ENCODE measurements at regions of chr6 and their contacts with region 1.

Region 1: GRCh38 chr6:18264219-18264922 is at the start of gene DEK:
- DNase-seq: peak; percentile 93
- ATAC-seq: peak; percentile 88
- total RNA-seq, gene DEK: 68.6 TPM

Region 2: DNA sequence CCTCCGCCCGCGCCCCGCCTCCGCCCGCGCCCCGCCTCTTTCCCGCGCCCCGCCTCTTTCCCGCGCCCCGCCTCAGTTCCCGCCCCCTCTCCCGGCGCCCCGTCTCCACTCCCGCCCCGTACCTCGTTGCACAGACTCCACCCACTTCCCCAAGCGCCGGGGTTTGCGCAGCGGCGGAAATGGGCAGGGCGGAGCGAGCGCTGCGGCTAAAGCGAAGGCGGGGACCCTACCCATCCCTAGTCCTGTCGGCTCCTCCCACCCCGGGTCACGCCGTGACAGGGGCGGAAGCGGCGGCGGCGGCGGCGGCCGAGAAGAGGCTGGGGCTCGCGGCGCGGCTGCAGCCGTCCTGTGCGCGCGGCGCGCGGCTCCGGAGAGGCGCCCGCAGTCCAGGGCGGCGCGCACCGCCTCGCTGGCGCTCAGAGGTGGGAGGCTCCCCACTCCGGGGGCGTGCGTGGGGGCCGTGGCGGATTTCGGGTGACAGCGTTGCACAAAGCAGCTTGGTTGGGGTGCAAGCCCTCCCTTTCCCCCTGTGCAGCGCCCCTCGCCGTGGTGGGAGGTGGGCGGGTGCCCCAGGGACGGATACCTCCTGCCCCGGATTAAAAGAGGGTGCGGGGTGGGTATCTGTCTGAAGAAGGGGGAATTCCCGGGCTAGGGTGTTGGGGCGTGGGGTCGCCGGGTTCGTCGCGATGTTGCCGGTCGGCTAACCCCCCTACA is 109.1 kb before region 1 on chr6 and contains the start of gene KDM1B:
- intact Hi-C with region 1: loop called (anchors 5 kb)
- DNase-seq: peak; percentile 99
- ATAC-seq: peak; percentile 99
- total RNA-seq, gene KDM1B: 13.0 TPM

Region 3: DNA sequence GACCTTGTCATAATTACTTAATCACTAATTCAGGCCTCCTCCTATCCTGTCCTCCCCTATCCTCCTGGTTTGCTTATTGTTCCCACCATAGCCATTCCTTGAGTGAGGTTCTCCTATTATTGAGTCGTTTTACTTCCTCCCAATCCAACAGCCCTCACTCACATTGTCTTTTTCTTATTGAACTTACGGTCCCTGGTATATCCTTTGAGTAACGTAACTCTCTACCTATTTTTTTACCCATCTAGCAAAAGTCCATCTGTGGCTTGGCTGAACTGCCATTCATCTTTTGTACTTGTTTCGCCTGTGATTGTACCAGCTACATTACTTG is 43.1 kb before region 1 on chr6:
- intact Hi-C with region 1: loop called (anchors 5 kb)
- DNase-seq: no peak
- ATAC-seq: no peak